HCT116 (cell line): ENCODE measurements at regions of chr3 and their contacts with region 1.

Region 1: DNA sequence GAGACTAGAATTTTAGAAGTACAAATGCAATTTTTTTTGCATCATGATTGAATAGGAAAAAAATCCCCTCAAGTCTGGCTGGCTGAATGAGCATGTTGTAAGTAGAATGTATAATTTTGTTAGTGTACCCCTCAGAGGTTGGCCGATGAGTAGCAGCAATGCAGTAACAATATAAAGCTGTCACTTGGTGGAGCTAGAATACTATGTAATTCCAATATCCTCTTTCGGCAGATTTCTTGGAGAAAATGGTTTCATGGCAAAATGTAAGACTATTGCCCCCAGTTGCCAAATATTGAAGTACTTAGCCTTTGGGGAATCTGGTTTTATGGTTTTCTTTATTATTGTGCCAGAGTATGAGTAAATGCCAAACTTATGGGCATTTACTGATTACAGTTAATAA is 39.8 kb upstream of the SGO1 start:
- DNase-seq: peak; percentile 40
- ATAC-seq: peak; percentile 81
- H3K4me3 ChIP-seq: no peak overlapping the region
- H3K27ac ChIP-seq: no peak overlapping the region
- H3K4me1 ChIP-seq: no peaks in the 10 kb centered on the region
- H3K27me3 ChIP-seq: peaks cover 19% of the 10 kb centered on the region
- CTCF ChIP-seq: peak; percentile 29 to 57 (median 56); a peak in 4 of 6 replicates
- POLR2A ChIP-seq: no peak
- RAD21 ChIP-seq: peak; percentile 73

Region 2: DNA sequence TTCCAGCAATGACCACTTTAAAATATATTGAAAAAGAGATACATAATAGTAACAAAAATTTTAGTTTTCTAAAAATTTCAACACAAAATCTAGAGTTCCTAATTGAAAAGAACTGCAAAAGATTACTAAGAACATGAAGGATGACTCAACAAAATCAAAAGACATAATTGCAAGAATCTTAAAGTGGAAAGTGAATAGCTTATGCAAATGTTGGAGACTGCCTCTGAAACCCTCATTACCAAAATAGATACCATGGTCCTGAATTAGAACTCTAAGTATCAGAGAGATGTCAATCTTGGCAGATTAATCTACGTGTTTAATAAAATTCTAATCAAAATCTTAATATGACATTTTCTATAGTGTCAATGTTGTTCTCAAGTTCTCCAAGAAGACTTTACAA is 20.9 kb after region 1 on chr3:
- CTCF ChIA-PET with region 1: no interaction called
- POLR2A ChIA-PET with region 1: no interaction called
- RAD21 ChIA-PET with region 1: no interaction called
- intact Hi-C with region 1: no loop called
- DNase-seq: no peak
- ATAC-seq: no peak
- H3K4me3 ChIP-seq: no peak overlapping the region
- H3K27ac ChIP-seq: no peak overlapping the region
- H3K4me1 ChIP-seq: no peaks in the 10 kb centered on the region
- H3K27me3 ChIP-seq: no peaks in the 10 kb centered on the region
- CTCF ChIP-seq: no peak
- POLR2A ChIP-seq: no peak
- RAD21 ChIP-seq: no peak

Region 3: DNA sequence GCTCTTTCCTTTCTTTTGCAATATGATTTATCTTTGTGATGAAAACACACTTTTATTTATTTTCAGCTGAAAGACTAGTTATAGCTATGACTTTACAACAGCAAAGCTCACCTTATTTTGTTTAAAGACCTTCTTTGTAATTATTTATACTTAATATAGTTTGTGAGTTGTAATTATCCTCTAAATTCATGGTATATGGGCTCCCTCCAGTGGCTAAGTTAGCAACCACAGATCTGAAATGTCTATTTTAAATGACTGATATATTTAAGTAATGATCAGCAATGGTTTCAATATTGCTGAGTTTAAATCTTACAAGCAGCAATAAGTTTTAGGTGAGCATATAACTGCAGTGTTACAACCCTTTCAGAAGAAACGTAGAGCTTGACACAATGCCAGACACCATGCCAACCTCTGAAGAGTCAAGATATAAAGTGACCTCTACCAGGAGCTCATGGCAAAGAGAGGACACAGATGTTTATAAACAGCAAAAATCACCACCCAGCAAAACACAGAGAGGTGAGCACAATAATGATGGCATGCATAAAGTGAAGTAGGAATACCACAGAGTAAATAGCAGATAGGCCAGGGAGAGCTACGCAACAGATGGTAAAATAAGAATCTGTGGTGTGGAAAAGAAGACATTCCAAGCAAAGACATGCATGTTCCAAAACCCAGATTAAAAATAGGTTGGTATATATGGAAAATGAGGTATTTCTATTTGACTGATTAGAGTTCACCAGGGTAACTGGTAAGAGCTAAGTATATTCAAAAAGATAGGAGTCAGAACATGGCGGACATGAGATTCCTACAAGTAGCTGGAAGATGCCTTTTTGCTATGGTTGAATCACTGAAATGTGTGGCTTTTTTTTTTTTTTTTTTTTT is 1668.9 kb after region 1 on chr3:
- CTCF ChIA-PET with region 1: no interaction called
- POLR2A ChIA-PET with region 1: no interaction called
- RAD21 ChIA-PET with region 1: no interaction called
- intact Hi-C with region 1: loop called (anchors 5 kb)
- DNase-seq: no peak
- ATAC-seq: no peak
- H3K4me3 ChIP-seq: no peak overlapping the region
- H3K27ac ChIP-seq: no peak overlapping the region
- H3K4me1 ChIP-seq: no peaks in the 10 kb centered on the region
- H3K27me3 ChIP-seq: no peaks in the 10 kb centered on the region
- CTCF ChIP-seq: peak in 2 of 3 experiments; percentile 18 to 34; a peak in 5 of 6 replicates
- POLR2A ChIP-seq: no peak
- RAD21 ChIP-seq: no peak; the same call in 1 of the 2 replicates